ENCODE measurements at regions of chr3 and their contacts with region 1.

Region 1: DNA sequence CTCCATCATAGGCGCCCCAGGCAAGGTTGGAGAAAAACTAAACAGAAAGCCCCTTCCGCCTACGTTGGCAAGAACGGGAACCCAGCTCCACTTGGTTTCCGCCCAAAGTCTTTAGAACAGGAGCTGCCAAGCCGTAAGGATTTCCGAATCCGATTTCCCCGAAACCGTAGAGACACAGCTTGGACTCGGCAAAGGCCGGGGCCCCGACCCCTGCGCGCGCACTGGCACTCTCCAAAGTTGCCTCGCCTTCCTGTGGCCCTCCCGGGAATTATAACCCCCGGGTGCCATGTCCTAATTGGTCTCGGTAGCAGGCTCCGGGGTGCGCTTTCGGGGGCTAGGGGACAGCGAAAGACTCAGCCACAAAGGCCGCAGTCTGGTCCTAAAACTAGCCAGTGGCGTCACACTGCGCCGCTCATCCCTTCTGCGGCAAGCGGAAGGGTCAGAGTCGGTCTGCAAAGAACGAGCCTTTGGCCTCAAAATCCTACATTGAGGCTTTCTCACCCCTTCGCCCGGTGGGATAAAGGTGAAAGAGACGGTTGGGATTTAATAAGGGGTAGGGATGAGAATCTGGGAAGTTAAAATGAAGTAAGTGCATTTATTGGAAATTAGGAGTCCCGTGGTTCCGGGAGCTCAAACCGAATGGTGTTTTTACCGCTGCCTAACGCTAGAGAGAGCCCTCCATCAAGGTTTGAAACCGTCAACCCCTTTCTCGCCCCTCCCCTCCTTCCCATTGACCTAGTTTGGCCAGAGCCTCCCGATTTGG is 6.8 kb downstream of the BCL6 start:
- DNase-seq: peak; percentile 80
- H3K4me3 ChIP-seq: peak overlapping the region; percentile 55
- H3K27ac ChIP-seq: peak overlapping the region; percentile 91
- H3K27me3 ChIP-seq: no peaks in the 10 kb centered on the region
- CTCF ChIP-seq: peak; percentile 85

Region 2: GRCh38 chr3:187082758-187083375 is 655.6 kb before region 1 on chr3:
- CTCF ChIA-PET with region 1: no interaction called
- POLR2A ChIA-PET with region 1: no interaction called
- DNase-seq: no peak
- H3K4me3 ChIP-seq: no peak overlapping the region
- H3K27ac ChIP-seq: no peak overlapping the region
- H3K27me3 ChIP-seq: no peaks in the 10 kb centered on the region
- CTCF ChIP-seq: no peak

Region 3: DNA sequence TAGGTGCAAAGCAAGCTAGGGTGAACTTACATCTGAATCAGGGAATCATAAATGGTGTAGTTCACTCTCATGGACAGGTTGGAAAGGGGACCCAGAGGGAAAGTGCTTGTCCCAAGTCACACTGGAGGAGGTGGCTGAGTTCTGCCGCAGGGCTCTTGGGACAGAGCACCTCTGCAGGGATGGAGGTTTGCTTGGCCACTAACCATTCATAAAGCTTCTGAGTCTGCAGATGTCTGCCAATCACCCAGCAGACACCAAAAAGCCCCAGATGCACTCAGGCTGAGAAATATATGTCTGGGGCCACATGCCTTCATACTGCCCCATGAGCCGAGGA is 18.2 kb before region 1 on chr3:
- CTCF ChIA-PET with region 1: no interaction called
- POLR2A ChIA-PET with region 1: no interaction called
- DNase-seq: no peak
- H3K4me3 ChIP-seq: no peak overlapping the region
- H3K27ac ChIP-seq: no peak overlapping the region
- H3K27me3 ChIP-seq: peaks cover 4% of the 10 kb centered on the region
- CTCF ChIP-seq: no peak

Region 4: GRCh38 chr3:188205992-188206416 is 467.5 kb after region 1 on chr3:
- CTCF ChIA-PET with region 1: interaction called, 16 read pairs
- POLR2A ChIA-PET with region 1: no interaction called
- DNase-seq: no peak
- H3K4me3 ChIP-seq: no peak overlapping the region
- H3K27ac ChIP-seq: no peak overlapping the region
- H3K27me3 ChIP-seq: no peaks in the 10 kb centered on the region
- CTCF ChIP-seq: peak; percentile 34

Region 5: DNA sequence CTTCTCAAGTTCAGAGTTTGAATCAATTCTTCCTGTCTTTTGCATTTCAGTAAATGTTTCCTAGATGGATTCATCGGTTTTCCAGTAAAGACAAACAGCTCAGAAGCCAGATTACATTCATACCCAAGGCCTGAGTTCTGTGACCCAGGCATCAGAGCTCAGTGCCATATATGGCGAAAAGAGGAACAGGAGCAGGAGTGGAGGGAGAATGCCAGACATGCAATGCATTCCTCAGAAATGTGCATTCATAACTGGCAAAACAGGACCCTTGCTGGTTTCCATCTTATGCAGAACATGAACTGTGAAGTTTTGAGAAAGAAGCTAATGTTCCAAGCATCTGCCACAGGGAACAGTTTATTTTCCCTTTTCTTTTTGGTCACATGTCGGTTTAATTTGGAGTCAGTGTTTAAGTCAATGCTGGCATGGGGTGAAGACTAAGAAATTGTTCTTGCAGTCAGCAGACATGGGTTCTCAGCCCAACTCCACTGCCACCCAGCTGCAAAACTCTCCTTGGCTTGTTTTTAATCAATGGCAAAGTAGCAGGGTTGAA is 532.0 kb after region 1 on chr3:
- CTCF ChIA-PET with region 1: interaction called, 51 read pairs
- POLR2A ChIA-PET with region 1: interaction called, 4 read pairs
- DNase-seq: peak; percentile 95
- H3K4me3 ChIP-seq: no peak overlapping the region
- H3K27ac ChIP-seq: peak overlapping the region; percentile 86
- H3K27me3 ChIP-seq: no peaks in the 10 kb centered on the region
- CTCF ChIP-seq: no peak

Region 6: GRCh38 chr3:188370081-188370830 is 631.7 kb after region 1 on chr3:
- CTCF ChIA-PET with region 1: interaction called, 10 read pairs
- POLR2A ChIA-PET with region 1: no interaction called
- DNase-seq: no peak
- H3K4me3 ChIP-seq: no peak overlapping the region
- H3K27ac ChIP-seq: no peak overlapping the region
- H3K27me3 ChIP-seq: no peaks in the 10 kb centered on the region
- CTCF ChIP-seq: no peak

Region 7: DNA sequence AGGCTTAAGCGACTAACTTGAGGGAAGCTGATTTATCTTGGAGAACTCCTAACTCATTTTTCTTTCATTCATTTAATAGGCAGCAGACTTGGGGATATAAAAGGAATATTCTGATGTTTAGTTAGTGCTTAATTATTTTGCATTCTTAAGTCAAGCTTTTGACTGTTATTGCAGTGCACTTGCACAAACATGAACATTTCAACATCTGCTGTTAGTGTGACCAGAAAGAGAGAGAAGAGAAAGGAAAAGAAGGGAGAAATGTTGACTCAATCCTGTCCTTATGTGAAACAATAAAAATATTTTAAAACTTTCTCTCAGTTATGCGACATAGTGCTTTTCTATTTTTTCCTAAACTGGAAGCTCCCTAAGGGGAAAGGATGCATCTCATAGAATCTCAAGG is 923.3 kb after region 1 on chr3:
- CTCF ChIA-PET with region 1: interaction called, 10 read pairs
- POLR2A ChIA-PET with region 1: no interaction called
- DNase-seq: no peak
- H3K4me3 ChIP-seq: no peak overlapping the region
- H3K27ac ChIP-seq: no peak overlapping the region
- H3K27me3 ChIP-seq: no peaks in the 10 kb centered on the region
- CTCF ChIP-seq: no peak

Region 8: GRCh38 chr3:188954590-188955208 is 1216.2 kb after region 1 on chr3:
- CTCF ChIA-PET with region 1: interaction called, 314 read pairs
- POLR2A ChIA-PET with region 1: interaction called, 12 read pairs
- DNase-seq: peak; percentile 71
- H3K4me3 ChIP-seq: no peak overlapping the region
- H3K27ac ChIP-seq: no peak overlapping the region
- H3K27me3 ChIP-seq: no peaks in the 10 kb centered on the region
- CTCF ChIP-seq: peak; percentile 97